Natural killer cell (primary cell): ENCODE measurements at regions of chr1 and their contacts with region 1.

Region 1: GRCh38 chr1:185426848-185427247 is 109.8 kb upstream of the IVNS1ABP start:
- DNase-seq: no peak
- ATAC-seq: no peak
- H3K4me3 ChIP-seq: no peak overlapping the region
- H3K4me3 Mint-ChIP-seq: no peak overlapping the region
- H3K27ac ChIP-seq: no peak overlapping the region
- H3K27ac Mint-ChIP-seq: no peak overlapping the region
- H3K4me1 ChIP-seq: peaks cover 16% of the 10 kb centered on the region
- H3K4me1 Mint-ChIP-seq: peaks cover 35 to 71% of the 10 kb centered on the region in 2 donors
- H3K27me3 ChIP-seq: no peaks in the 10 kb centered on the region
- H3K27me3 Mint-ChIP-seq: no peaks in the 10 kb centered on the region
- CTCF ChIP-seq: no peak

Region 2: DNA sequence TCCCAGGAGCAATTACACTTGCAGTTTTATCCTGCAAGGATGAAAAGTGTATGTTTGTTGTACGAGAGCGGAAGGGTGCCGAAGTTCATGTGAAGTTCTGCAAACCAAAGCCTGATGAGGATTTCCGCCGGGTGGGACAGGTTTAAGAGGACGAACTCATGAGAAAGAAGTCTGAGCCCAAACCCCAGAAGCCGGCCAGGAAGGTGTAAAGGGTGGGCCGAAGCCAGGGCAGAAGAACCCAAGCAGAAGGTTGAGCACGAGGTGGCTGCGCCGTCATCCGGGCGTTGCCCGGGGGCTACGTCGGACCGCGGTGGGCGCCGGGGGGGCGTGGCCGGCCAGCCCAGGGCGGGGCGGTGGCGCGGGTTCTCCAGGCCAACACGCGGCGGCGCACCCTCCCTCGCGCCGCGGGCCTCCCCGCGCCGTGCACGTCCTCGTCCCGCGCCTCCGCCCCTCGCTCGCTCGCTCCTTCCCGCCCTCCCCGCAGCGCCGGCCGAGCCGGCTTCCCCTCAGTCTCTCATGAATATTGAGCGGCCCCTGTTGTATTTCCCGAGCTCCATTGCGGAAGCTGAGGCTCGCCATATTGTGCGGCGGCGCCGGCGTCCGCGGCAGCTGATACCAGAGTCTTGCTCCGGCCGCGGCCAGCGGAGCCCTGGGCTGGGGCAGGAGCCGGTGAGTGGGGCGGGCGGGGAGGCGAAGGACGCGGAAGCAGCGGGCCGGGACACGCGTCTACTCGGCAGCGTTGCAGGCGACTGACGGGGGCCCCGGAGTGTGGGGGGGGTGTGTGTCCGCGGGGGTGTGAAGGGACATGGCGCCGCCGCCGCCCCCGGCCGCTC is 381.7 kb before region 1 on chr1 and contains the start of gene RNF2:
- intact Hi-C with region 1: loop called (anchors 10 kb)
- DNase-seq: peak; percentile 75 to 92
- ATAC-seq: peak; percentile 87 to 95 (median 87)
- H3K4me3 ChIP-seq: peak within 1 kb of the TSS; percentile 89
- H3K4me3 Mint-ChIP-seq: peak within 1 kb of the TSS; percentile 94
- H3K27ac ChIP-seq: peak within 1 kb of the TSS; percentile 74
- H3K27ac Mint-ChIP-seq: peak within 1 kb of the TSS; percentile 80 to 93
- H3K4me1 ChIP-seq: peaks cover 3% of the 10 kb centered on the region
- H3K4me1 Mint-ChIP-seq: peaks cover 38 to 48% of the 10 kb centered on the region in 2 donors
- H3K27me3 ChIP-seq: no peaks in the 10 kb centered on the region
- H3K27me3 Mint-ChIP-seq: no peaks in the 10 kb centered on the region
- CTCF ChIP-seq: no peak
- total RNA-seq, gene RNF2: 14.0 to 21.9 (median 19.5) TPM

Region 3: DNA sequence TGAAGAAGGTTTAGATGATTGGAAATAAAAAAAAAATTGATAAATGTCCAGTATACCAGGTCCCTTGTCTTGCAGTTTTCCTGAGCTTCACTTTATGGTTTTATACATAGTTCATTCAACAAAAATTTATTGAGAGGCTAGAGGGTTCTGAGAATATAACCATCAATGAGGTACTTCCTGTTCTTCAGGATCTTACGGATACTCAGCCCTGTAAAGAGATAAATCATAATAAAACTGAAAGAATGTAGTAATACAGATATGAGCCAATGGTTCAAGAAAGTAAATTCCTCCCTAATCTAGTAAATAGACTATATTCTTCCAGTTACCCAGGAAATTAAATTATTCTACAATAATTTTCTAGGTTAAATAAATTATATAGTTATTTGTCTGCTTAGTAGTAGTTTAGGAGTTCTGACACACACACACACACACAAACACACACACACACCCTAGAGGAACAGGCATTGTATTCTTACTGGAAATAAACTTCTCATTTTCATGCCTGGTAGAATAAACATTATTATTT is 237.0 kb after region 1 on chr1:
- intact Hi-C with region 1: no loop called
- DNase-seq: no peak
- ATAC-seq: no peak
- H3K4me3 ChIP-seq: no peak overlapping the region
- H3K4me3 Mint-ChIP-seq: no peak overlapping the region
- H3K27ac ChIP-seq: no peak overlapping the region
- H3K27ac Mint-ChIP-seq: no peak overlapping the region
- H3K4me1 ChIP-seq: no peaks in the 10 kb centered on the region
- H3K4me1 Mint-ChIP-seq: no peaks in the 10 kb centered on the region
- H3K27me3 ChIP-seq: no peaks in the 10 kb centered on the region
- H3K27me3 Mint-ChIP-seq: peaks cover 0 to 2% of the 10 kb centered on the region in 2 donors
- CTCF ChIP-seq: no peak